Activated T-helper 1 cell treated with anti-CD3 and anti-CD28 coated beads, Interleukin-12 subunit alpha, Interleukin-12 subunit beta, Interleukin-2, Interleukin-4 antibody, amounts not matched to agents 30 ng/mL and 10 ng/mL and 1 ng/mL, durations not matched to agents 14 hours and 24 hours and 36 hours (primary cell): ENCODE measurements at regions of chr17 and their contacts with region 1.

Region 1: DNA sequence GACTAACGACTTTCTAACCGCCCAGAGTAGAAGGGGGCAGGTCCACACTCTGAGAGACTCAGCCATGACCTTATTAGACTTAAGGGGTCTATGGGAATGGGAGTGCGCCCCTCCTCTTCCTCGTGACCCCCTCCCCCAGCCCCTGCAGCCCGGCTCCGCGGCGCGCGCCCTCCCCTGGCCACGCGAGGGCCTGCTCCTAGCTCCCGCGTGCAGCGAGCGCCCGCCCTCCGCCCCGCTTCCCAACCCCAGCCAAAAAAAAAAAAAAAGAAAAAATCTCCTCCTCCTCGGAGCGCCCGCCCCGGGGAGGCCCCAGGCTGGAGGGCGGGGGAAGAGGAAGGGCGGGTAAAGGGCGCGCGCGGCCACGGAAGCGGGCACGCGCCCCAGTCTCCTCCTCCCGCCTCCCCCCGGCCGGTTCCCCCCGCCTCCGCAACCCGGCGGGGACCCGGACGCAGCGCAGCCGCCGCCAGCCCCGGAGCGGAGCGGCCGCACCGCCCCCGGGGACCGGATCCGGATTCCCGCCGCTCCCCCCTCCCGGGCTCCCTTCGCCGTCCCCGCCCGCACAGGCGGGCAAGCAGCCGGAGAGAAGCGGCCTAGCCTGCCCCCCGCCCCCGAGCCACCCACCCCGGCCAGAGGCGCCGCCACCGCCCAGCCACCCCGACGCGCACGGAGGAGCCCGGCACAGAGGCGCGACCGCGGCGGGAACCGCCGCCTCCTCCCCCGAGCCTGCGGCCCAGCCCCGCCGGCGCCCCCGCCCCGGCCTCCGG is 949 bp downstream of the UBTF start:
- DNase-seq: peak; percentile 86
- H3K4me3 Mint-ChIP-seq: peak overlapping the region; percentile 98
- H3K27ac Mint-ChIP-seq: peak overlapping the region; percentile 96
- H3K4me1 Mint-ChIP-seq: peaks cover 45% of the 10 kb centered on the region
- H3K27me3 Mint-ChIP-seq: no peaks in the 10 kb centered on the region

Region 2: DNA sequence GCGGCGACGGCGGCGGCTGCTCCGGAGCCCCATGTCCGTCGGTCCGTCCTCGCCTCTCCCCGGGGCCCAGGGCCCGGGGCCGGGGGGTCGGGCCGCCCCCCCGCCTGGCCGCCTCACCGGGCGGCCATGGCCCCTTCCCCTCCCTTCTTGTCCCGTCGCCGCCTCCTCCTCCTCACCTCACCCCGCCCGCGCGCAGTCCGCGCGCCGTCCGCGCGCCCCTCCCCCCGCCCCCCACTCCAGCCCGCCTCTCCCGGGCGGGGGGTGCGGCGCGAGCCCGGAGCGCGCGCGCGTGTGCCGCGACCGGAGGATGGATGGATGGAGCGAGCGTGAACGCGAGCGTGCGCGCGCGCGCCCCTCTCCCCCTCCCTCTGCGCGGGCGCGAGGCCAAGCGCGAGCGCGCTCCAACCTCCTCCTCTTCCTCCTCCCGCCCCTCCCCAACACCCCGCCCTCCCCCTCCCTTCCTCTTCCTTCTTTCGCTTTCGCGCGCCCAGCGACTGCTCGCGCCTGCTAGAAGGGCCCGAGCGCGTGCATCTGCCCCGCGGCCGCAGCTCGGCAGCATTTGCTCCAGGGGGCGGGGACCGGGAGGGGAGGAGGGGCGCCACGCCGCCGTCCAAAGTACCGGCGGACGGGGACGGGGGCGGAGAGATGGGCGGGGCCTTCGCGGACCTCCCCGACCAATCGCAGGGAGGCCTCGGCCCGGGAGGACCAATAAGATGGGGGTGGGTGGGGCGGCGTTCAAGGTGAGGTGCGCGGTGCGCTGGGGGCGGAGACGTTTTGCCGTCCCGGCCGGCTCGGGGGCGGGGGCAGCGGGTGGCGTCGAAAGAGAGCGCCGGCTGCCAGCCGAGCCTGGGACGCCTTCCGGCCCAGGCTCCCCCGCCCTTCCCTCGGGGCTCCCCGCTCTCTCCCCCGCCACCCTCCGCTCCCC is 18.7 kb before region 1 on chr17 and contains the start of gene ATXN7L3:
- intact Hi-C with region 1: loop called (anchors 1 kb)
- DNase-seq: peak; percentile 97
- H3K4me3 Mint-ChIP-seq: peak within 1 kb of the TSS; percentile 94
- H3K27ac Mint-ChIP-seq: peak within 1 kb of the TSS; percentile 90
- H3K4me1 Mint-ChIP-seq: peaks cover 48% of the 10 kb centered on the region
- H3K27me3 Mint-ChIP-seq: no peaks in the 10 kb centered on the region
- total RNA-seq, gene ATXN7L3: 125 and 126 TPM in 2 replicates

Region 3: GRCh38 chr17:44247440-44247841 is 28.9 kb after region 1 on chr17:
- intact Hi-C with region 1: loop called (anchors 2 kb)
- DNase-seq: no peak
- H3K4me3 Mint-ChIP-seq: no peak overlapping the region
- H3K27ac Mint-ChIP-seq: no peak overlapping the region
- H3K4me1 Mint-ChIP-seq: peaks cover 33% of the 10 kb centered on the region
- H3K27me3 Mint-ChIP-seq: no peaks in the 10 kb centered on the region

Region 4: GRCh38 chr17:44308320-44308818 is 89.8 kb after region 1 on chr17 and contains the start of gene RUNDC3A:
- intact Hi-C with region 1: loop called (anchors 1 kb)
- DNase-seq: peak; percentile 79
- H3K4me3 Mint-ChIP-seq: peak within 1 kb of the TSS; percentile 57
- H3K27ac Mint-ChIP-seq: no peak within 1 kb of the TSS
- H3K4me1 Mint-ChIP-seq: no peaks in the 10 kb centered on the region
- H3K27me3 Mint-ChIP-seq: peaks cover 28% of the 10 kb centered on the region
- total RNA-seq, gene RUNDC3A: 0.13 and 0.22 TPM in 2 replicates

Region 5: DNA sequence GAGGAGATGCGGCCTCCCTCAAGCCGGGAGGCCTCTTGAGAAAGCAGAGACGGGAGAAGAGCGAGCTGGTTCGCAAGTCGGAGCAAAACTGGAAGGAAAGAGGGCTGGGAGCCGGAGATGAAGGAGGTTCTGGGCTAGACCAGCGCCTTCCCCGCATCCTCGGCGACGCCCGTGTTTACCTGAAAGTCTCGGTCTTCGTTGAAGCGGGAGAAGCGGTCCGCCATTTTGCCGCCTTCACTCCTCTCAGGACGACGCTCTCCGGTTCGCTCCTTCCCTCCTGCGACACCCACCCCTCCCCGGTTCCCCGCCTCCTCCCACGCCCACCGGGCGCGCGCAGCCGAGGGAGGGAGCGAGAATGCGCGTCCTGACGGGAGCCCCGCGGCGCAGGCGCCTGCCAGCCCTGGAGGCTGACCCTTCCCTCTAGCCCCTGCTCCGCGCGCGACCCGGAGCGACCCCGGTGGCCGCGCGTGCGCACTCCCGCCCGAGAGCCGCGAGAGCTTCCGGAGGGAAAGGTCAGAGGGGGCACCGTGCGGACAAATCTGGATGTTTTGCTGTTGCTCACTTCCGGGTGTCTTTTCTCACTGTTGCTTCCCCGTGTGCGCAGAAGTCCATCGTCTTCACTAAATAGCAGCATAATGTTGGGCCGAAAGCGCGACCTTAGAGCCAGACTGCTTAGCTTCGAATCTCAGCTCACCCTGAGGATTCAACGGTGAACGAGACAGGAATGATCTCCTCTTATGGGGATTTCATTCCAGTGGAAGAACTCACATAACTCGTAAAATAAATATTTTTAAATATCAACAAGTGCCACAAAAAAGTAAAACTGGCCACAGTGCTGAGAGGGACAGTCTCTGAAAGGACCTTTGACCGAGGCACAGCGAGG is 284.9 kb after region 1 on chr17 and contains the start of gene GPATCH8:
- intact Hi-C with region 1: loop called (anchors 1 kb)
- DNase-seq: peak; percentile 97
- H3K4me3 Mint-ChIP-seq: peak within 1 kb of the TSS; percentile 98
- H3K27ac Mint-ChIP-seq: peak within 1 kb of the TSS; percentile 95
- H3K4me1 Mint-ChIP-seq: peaks cover 30% of the 10 kb centered on the region
- H3K27me3 Mint-ChIP-seq: no peaks in the 10 kb centered on the region
- total RNA-seq, gene GPATCH8: 50.4 and 51.1 TPM in 2 replicates